Activated T-helper 1 cell treated with anti-CD3 and anti-CD28 coated beads, Interleukin-12 subunit alpha, Interleukin-12 subunit beta, Interleukin-2, Interleukin-4 antibody, amounts not matched to agents 30 ng/mL and 10 ng/mL and 1 ng/mL, durations not matched to agents 14 hours and 24 hours and 36 hours (primary cell): ENCODE measurements at regions of chr16 and their contacts with region 1.

Region 1: DNA sequence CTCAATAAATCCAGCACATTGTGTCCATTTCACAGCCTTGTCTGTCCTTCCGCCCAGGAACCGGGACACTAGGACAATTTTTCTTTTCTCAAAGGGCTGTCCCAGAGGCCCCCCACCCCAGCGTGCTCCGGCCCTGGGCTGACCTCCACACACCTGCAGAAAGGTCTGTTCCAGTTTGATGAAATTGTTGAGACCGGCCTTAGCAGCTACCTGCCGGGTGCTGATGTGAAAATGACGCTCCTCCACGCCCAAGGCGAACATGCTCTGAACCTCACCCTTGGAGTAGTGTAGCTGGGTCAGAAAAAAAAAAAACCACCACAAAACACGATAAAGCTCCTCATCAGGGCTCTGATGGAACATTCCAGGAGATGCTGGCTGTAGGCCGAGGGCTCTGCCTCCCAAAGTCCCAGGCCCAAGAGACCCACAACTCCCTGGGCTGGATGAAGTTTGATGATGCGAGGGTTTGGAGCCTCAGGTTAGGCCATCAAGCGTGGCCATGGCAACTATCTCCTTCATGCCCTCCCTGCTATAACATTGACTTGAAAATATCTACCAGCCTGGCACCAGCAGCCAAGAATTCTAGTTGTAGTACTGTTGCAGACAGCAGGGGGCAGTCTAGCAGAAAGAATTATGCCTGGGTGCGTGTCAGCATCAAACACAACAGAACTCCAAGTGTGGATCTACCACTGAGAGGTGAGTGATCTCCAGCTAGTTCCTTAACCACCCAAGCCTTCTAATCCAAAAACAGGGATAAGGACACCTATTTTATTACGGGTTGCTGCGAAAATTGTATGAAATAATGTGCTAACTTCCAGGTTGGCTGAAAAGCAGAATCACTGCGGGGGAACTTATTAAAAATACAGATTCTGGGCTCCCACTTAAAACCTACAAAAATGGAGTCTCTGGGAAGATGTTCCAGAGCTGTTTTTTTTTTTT is 62.1 kb downstream of the RMI2 start:
- DNase-seq: peak; percentile 48
- H3K4me3 Mint-ChIP-seq: no peak overlapping the region
- H3K27ac Mint-ChIP-seq: no peak overlapping the region
- H3K4me1 Mint-ChIP-seq: no peaks in the 10 kb centered on the region
- H3K27me3 Mint-ChIP-seq: peaks cover 6% of the 10 kb centered on the region

Region 2: GRCh38 chr16:10954903-10955302 is 452.4 kb before region 1 on chr16:
- intact Hi-C with region 1: loop called (anchors 1 kb)
- DNase-seq: no peak
- H3K4me3 Mint-ChIP-seq: peak overlapping the region; percentile 23
- H3K27ac Mint-ChIP-seq: no peak overlapping the region
- H3K4me1 Mint-ChIP-seq: peaks cover 28% of the 10 kb centered on the region
- H3K27me3 Mint-ChIP-seq: no peaks in the 10 kb centered on the region

Region 3: GRCh38 chr16:11459722-11460121 is 52.4 kb after region 1 on chr16:
- intact Hi-C with region 1: loop called (anchors 2 kb)
- DNase-seq: no peak
- H3K4me3 Mint-ChIP-seq: no peak overlapping the region
- H3K27ac Mint-ChIP-seq: no peak overlapping the region
- H3K4me1 Mint-ChIP-seq: peaks cover 6% of the 10 kb centered on the region
- H3K27me3 Mint-ChIP-seq: peaks cover 3% of the 10 kb centered on the region

Region 4: GRCh38 chr16:11639925-11640899 is 232.9 kb after region 1 on chr16:
- intact Hi-C with region 1: loop called (anchors 1 kb)
- DNase-seq: no peak
- H3K4me3 Mint-ChIP-seq: no peak overlapping the region
- H3K27ac Mint-ChIP-seq: no peak overlapping the region
- H3K4me1 Mint-ChIP-seq: peaks cover 5% of the 10 kb centered on the region
- H3K27me3 Mint-ChIP-seq: peaks cover 11% of the 10 kb centered on the region

Region 5: GRCh38 chr16:11715246-11715947 is 308.1 kb after region 1 on chr16:
- intact Hi-C with region 1: loop called (anchors 1 kb)
- DNase-seq: no peak
- H3K4me3 Mint-ChIP-seq: no peak overlapping the region
- H3K27ac Mint-ChIP-seq: peak overlapping the region; percentile 13
- H3K4me1 Mint-ChIP-seq: peaks cover 16% of the 10 kb centered on the region
- H3K27me3 Mint-ChIP-seq: no peaks in the 10 kb centered on the region

Region 6: GRCh38 chr16:11806721-11807120 is 399.4 kb after region 1 on chr16:
- intact Hi-C with region 1: loop called (anchors 5 kb)
- DNase-seq: no peak
- H3K4me3 Mint-ChIP-seq: no peak overlapping the region
- H3K27ac Mint-ChIP-seq: no peak overlapping the region
- H3K4me1 Mint-ChIP-seq: peaks cover 12% of the 10 kb centered on the region
- H3K27me3 Mint-ChIP-seq: no peaks in the 10 kb centered on the region